CD4-positive, alpha-beta T cell (primary cell): ENCODE measurements at regions of chr11 and their contacts with region 1.

Region 1: DNA sequence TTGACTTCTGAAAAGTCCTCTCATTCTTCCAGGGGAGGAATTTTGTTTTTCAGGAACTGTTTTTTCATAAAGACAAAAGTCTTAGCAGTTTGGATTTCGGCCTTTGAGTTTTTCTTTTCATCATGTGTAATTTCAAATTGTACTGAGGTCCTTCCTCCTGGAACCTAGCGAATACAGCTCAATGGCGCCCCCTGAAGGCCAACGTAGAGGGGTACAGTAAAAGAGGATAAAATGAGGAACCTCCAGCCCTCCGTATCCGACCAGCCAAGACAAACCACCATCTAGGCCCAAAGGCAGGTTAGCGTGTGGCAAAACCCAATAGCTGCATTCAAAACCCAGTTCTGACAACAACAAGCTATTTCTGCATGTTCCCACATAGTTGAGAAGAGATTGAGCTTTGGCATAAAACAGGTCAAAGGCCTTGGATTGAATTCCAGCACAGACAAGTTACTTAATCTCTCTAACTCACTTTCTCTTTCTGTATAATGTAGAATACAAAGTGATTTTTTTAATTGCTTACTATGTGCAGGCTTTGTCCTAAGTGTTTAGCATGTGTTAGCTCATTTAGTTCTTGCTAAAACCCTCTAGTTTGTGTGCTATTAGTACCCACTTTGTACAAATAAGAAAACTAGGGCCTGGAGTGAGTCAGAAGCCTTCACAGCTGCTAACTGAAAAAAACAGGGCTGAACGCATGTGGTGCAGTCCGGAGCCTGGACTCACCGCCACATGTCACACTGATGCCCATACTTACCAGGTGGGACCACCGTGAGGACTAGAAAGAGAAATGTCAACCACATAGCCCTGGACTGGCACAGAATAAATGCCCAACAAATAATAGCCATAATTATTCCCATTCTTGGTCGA is 43.2 kb upstream of the ETS1 start:
- DNase-seq: peak; percentile 85 to 98 (median 92)
- ATAC-seq: peak; percentile 79
- H3K4me3 ChIP-seq: no peak overlapping the region
- H3K4me3 Mint-ChIP-seq: peak overlapping the region; percentile 62
- H3K27ac ChIP-seq: peak overlapping the region; percentile 56 to 70
- H3K27ac Mint-ChIP-seq: peak overlapping the region; percentile 97
- H3K4me1 ChIP-seq: peaks cover 65% of the 10 kb centered on the region
- H3K4me1 Mint-ChIP-seq: peaks cover 69% of the 10 kb centered on the region
- H3K27me3 ChIP-seq: no peaks in the 10 kb centered on the region
- H3K27me3 Mint-ChIP-seq: no peaks in the 10 kb centered on the region
- CTCF ChIP-seq: peak; percentile 89

Region 2: DNA sequence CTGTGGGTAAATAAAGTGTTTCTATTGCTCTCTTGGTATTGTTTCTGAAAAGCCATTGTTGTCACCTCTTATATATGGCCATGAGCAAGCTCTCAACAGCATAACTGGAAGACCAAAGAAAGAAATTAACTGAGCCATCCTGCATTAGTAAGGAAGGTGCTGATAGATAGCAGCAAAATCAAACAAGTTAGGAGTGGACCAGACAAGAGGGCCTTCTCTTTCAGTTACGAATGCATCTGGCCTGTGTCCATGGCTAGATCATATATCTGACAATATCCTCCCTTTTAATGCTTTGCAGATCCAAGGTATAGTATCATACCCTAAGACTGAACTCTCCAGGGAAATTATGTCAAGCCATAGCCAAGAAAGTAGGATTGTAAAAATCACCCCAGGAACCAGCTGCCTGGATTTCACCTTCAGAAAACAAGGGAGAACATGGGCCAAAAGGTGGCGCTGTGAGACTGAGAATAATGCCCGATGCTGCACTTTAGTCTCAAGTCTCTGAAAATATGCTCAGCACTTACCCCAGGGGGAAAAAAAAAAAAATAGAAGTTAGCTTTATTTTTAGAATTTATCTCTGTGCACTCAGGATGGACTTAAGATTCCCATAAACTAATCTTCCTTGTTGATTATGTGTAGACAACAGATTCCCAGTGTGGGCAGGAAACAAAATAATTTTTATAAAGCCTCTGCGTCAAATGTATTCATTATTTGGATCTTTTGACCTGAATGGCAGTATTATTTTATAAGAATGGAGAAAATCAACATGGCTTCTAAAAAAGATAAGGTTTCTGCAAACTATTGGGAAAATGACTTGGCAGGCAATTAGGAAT is 458.3 kb before region 1 on chr11:
- CTCF ChIA-PET with region 1: interaction called, 59 read pairs
- POLR2A ChIA-PET with region 1: interaction called, 13 read pairs
- intact Hi-C with region 1: loop called (anchors 1 kb)
- DNase-seq: peak; percentile 73 to 92 (median 84)
- ATAC-seq: peak; percentile 83
- H3K4me3 ChIP-seq: no peak overlapping the region
- H3K4me3 Mint-ChIP-seq: no peak overlapping the region
- H3K27ac ChIP-seq: no peak overlapping the region
- H3K27ac Mint-ChIP-seq: no peak overlapping the region
- H3K4me1 ChIP-seq: no peaks in the 10 kb centered on the region
- H3K4me1 Mint-ChIP-seq: peaks cover 6% of the 10 kb centered on the region
- H3K27me3 ChIP-seq: no peaks in the 10 kb centered on the region
- H3K27me3 Mint-ChIP-seq: no peaks in the 10 kb centered on the region
- CTCF ChIP-seq: peak; percentile 91

Region 3: DNA sequence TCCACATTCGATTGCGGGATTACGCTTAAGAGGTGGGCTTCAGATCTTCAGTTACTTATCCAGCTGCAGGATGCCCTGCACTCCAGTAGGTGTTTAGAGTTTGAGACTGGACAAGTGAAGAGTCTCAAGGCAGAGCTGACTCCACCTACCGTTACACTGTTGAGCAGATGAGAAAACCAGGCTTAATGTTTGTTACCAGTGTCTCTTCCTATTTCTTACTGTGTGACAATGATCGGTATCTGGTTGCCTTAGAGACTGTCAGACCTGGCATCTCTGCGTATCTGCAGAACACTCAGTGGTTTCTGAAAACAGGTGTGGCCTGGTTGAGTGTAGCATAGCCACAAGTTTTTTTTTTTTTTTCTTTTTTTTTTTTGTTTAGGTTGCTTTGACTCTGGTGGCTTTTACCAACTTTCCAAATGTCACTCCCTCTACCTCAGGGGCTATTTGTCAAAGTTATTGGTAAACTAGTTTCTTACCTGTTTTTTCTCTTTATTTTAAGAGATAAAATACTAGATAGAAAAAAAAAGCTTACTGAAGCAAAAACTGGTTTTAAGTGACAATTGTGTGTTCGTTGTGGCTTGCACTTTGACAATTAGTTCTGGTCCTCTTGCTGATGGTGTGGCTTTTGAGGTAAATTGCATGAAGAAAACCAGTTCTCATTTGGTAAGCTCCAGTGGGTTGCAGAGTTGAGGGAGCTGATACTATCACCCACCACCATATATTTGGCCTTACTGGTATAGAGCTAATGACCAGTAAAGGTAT is 328.0 kb before region 1 on chr11:
- CTCF ChIA-PET with region 1: interaction called, 6 read pairs
- POLR2A ChIA-PET with region 1: interaction called, 26 read pairs
- intact Hi-C with region 1: no loop called
- DNase-seq: peak; percentile 49 to 97 (median 65)
- ATAC-seq: peak; percentile 85
- H3K4me3 ChIP-seq: peak overlapping the region; percentile 65
- H3K4me3 Mint-ChIP-seq: peak overlapping the region; percentile 94
- H3K27ac ChIP-seq: peak overlapping the region; percentile 90 to 94
- H3K27ac Mint-ChIP-seq: peak overlapping the region; percentile 100
- H3K4me1 ChIP-seq: peaks cover 82% of the 10 kb centered on the region
- H3K4me1 Mint-ChIP-seq: peaks cover 98% of the 10 kb centered on the region
- H3K27me3 ChIP-seq: no peaks in the 10 kb centered on the region
- H3K27me3 Mint-ChIP-seq: no peaks in the 10 kb centered on the region
- CTCF ChIP-seq: peak; percentile 46

Region 4: DNA sequence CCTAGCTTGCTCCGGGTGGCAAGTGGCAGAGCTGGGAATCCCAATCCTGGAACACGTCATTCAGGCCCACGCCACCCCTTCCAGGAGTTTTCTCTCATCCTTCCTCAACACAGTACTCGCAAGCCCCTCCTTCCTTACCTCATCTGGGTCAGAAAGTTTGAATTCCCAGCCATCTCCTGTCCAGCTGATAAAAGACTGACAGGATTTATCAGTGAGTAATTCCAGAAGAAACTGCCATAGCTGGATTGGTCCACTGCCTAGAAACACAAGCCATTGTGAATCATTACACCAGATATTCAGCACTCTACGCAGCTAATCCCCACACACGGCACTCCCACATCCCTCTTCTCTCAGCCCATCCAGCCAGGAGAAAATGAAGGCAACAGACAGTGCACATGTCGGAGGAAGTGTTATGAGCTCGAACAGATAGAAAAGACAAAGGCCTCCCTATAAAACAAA is 167.2 kb before region 1 on chr11:
- CTCF ChIA-PET with region 1: interaction called, 9 read pairs
- POLR2A ChIA-PET with region 1: interaction called, 6 read pairs
- intact Hi-C with region 1: loop called in 1 of 2 experiments (anchors 1 kb)
- DNase-seq: peak in 2 of 14 experiments; percentile 3 to 17
- ATAC-seq: no peak
- H3K4me3 ChIP-seq: no peak overlapping the region
- H3K4me3 Mint-ChIP-seq: peak overlapping the region; percentile 82
- H3K27ac ChIP-seq: peak overlapping the region; percentile 92 to 94
- H3K27ac Mint-ChIP-seq: peak overlapping the region; percentile 99
- H3K4me1 ChIP-seq: peaks cover 73% of the 10 kb centered on the region
- H3K4me1 Mint-ChIP-seq: peaks cover 96% of the 10 kb centered on the region
- H3K27me3 ChIP-seq: no peaks in the 10 kb centered on the region
- H3K27me3 Mint-ChIP-seq: no peaks in the 10 kb centered on the region
- CTCF ChIP-seq: no peak

Region 5: GRCh38 chr11:128512474-128512996 is 118.1 kb before region 1 on chr11:
- CTCF ChIA-PET with region 1: interaction called, 11 read pairs
- POLR2A ChIA-PET with region 1: interaction called, 113 read pairs
- intact Hi-C with region 1: loop called in 1 of 2 experiments (anchors 5 kb)
- DNase-seq: peak in 5 of 14 experiments; percentile 42 to 61 (median 59)
- ATAC-seq: peak; percentile 7
- H3K4me3 ChIP-seq: peak overlapping the region; percentile 89
- H3K4me3 Mint-ChIP-seq: peak overlapping the region; percentile 93
- H3K27ac ChIP-seq: peak overlapping the region; percentile 43 to 93
- H3K27ac Mint-ChIP-seq: peak overlapping the region; percentile 99
- H3K4me1 ChIP-seq: peaks cover 55% of the 10 kb centered on the region
- H3K4me1 Mint-ChIP-seq: peaks cover 92% of the 10 kb centered on the region
- H3K27me3 ChIP-seq: no peaks in the 10 kb centered on the region
- H3K27me3 Mint-ChIP-seq: no peaks in the 10 kb centered on the region
- CTCF ChIP-seq: no peak

Region 6: GRCh38 chr11:128643661-128644317 is 13.2 kb after region 1 on chr11:
- CTCF ChIA-PET with region 1: no interaction called
- POLR2A ChIA-PET with region 1: no interaction called
- intact Hi-C with region 1: no loop called
- DNase-seq: no peak
- ATAC-seq: no peak
- H3K4me3 ChIP-seq: no peak overlapping the region
- H3K4me3 Mint-ChIP-seq: no peak overlapping the region
- H3K27ac ChIP-seq: no peak overlapping the region
- H3K27ac Mint-ChIP-seq: no peak overlapping the region
- H3K4me1 ChIP-seq: no peaks in the 10 kb centered on the region
- H3K4me1 Mint-ChIP-seq: peaks cover 7% of the 10 kb centered on the region
- H3K27me3 ChIP-seq: no peaks in the 10 kb centered on the region
- H3K27me3 Mint-ChIP-seq: no peaks in the 10 kb centered on the region
- CTCF ChIP-seq: no peak